ENCODE measurements at regions of chr21 and their contacts with region 1.

Region 1: DNA sequence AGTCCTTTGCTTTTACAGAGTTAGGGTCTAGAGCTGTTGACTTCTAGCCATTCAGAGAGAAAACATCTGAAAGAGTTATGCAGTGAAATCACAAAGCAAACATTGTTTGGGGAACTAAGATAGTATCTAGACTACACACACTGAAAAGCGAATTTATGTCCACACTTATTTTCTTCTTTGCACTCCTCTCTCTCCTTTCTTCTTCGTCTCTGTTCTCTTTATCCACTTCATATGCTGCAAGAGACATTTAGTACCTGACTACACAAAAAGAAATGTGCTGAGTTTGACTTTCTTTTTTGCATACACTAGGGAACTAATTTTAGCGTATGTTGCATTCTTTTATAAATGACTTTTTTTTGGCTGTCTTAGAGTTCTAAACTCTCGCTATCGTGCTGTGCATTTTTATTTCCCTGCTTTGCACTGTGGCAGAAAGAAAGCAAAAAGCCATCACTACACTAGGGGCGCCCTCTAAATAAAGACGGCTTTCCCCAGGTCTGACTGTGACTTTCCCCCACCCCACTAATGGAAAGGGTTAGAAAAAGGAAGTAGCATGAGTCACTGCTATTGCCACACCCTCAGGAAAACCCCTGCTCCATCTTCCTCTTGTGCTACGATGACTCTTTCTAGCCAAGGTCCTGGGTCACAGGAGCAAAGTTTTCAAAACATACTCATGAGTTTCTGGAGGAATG is 65.7 kb downstream of the MAP3K7CL start:
- DNase-seq: peak; percentile 33
- ATAC-seq: peak; percentile 97
- H3K4me3 Mint-ChIP-seq: peak overlapping the region; percentile 80
- H3K27ac Mint-ChIP-seq: peak overlapping the region; percentile 97
- H3K4me1 Mint-ChIP-seq: peaks cover 40% of the 10 kb centered on the region
- H3K27me3 Mint-ChIP-seq: no peaks in the 10 kb centered on the region
- CTCF ChIP-seq: peak; percentile 23

Region 2: DNA sequence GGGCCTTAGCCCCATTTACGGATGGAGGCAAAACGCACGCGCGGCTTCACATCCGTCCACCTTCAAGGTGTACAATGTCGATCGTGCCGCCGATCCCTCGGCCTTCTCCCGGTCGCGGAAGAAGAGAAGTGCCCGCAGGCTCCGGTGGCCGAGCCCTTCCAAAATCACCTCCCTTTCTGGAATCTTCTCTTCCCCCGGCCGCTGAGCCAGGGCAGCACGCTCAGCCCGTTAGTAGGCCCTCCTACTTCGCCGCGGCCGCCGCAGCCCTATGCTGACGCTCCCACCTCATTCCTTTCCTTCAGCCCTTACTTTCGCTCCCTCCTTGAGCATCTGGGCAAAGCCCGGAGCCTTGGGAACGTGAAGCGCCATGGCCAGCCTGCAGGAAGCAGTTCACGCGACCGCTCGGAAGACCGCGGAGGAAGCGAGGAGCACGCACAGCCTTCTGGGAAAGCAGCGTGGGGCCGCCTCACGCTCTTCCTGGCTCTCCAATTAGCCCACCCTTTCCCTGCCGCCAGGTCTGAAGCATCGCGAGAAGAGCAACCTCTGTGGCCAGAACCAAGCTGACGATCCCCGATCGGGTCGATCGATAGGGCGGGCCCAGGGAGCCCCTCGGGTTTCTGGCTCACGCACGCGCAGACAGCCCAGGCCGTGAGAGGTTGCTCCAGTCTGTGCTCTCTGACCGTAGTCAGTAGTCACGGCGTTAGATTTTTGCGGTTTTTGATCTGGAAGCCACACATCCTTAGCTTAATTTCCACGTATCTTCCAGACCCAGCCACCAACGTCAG is 122.7 kb before region 1 on chr21 and contains the start of gene CCT8:
- CTCF ChIA-PET with region 1: no interaction called
- POLR2A ChIA-PET with region 1: interaction called, 4 read pairs
- intact Hi-C with region 1: loop called (anchors 1 kb)
- DNase-seq: peak; percentile 93
- ATAC-seq: peak; percentile 90
- H3K4me3 Mint-ChIP-seq: peak within 1 kb of the TSS; percentile 98
- H3K27ac Mint-ChIP-seq: peak within 1 kb of the TSS; percentile 98
- H3K4me1 Mint-ChIP-seq: peaks cover 55% of the 10 kb centered on the region
- H3K27me3 Mint-ChIP-seq: no peaks in the 10 kb centered on the region
- CTCF ChIP-seq: no peak
- total RNA-seq, gene CCT8: 170 and 179 TPM in 2 replicates

Region 3: DNA sequence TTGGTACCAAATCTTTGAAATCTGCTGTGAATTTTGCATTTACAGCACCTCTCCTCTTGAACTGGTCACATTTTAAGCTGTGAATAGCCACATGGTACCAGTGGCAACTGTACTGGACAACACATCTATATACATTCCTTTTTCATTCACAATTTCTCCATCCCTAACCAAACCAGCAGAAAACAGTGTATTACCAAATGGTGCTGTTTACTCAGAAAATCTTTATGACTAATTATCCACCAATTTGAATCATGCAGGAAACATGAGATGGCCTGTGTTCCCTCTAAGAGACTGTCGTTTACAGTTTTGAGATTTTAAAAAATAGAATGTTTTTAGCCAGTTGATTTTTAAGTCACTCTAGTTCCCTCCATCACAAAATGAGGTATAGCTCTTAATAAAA is 105.1 kb before region 1 on chr21:
- CTCF ChIA-PET with region 1: no interaction called
- POLR2A ChIA-PET with region 1: no interaction called
- intact Hi-C with region 1: loop called (anchors 2 kb)
- DNase-seq: no peak
- ATAC-seq: no peak
- H3K4me3 Mint-ChIP-seq: no peak overlapping the region
- H3K27ac Mint-ChIP-seq: no peak overlapping the region
- H3K4me1 Mint-ChIP-seq: no peaks in the 10 kb centered on the region
- H3K27me3 Mint-ChIP-seq: no peaks in the 10 kb centered on the region
- CTCF ChIP-seq: no peak

Region 4: GRCh38 chr21:29164325-29164942 is 31.7 kb before region 1 on chr21:
- CTCF ChIA-PET with region 1: interaction called, 3 read pairs
- POLR2A ChIA-PET with region 1: no interaction called
- intact Hi-C with region 1: loop called (anchors 1 kb)
- DNase-seq: no peak
- ATAC-seq: peak; percentile 57
- H3K4me3 Mint-ChIP-seq: no peak overlapping the region
- H3K27ac Mint-ChIP-seq: no peak overlapping the region
- H3K4me1 Mint-ChIP-seq: peaks cover 7% of the 10 kb centered on the region
- H3K27me3 Mint-ChIP-seq: no peaks in the 10 kb centered on the region
- CTCF ChIP-seq: no peak

Region 5: DNA sequence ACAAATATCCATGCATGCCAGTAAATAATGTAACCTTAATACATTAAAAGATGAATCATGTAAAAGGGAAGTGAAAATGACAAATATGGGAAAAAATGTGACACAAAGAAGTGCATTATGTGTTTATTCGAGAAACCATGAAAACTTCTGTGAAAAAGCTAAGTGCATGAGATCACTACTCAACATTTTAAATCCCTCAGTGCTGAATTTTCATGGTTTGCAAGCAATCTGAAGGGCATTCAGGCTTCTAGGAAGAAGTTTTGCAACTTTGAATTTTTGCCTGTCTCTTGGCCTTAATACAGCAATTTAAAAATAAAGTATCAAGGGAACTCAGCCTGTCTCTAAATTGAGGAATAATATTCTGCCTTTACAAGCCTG is 12.5 kb after region 1 on chr21:
- CTCF ChIA-PET with region 1: interaction called, 3 read pairs
- POLR2A ChIA-PET with region 1: interaction called, 9 read pairs
- intact Hi-C with region 1: loop called (anchors 1 kb)
- DNase-seq: no peak
- ATAC-seq: peak; percentile 67
- H3K4me3 Mint-ChIP-seq: peak overlapping the region; percentile 62
- H3K27ac Mint-ChIP-seq: peak overlapping the region; percentile 84
- H3K4me1 Mint-ChIP-seq: peaks cover 23% of the 10 kb centered on the region
- H3K27me3 Mint-ChIP-seq: no peaks in the 10 kb centered on the region
- CTCF ChIP-seq: no peak

Region 6: GRCh38 chr21:29265690-29266479 is 69.8 kb after region 1 on chr21:
- CTCF ChIA-PET with region 1: no interaction called
- POLR2A ChIA-PET with region 1: no interaction called
- intact Hi-C with region 1: loop called (anchors 2 kb)
- DNase-seq: no peak
- ATAC-seq: peak; percentile 86
- H3K4me3 Mint-ChIP-seq: peak overlapping the region; percentile 17
- H3K27ac Mint-ChIP-seq: peak overlapping the region; percentile 82
- H3K4me1 Mint-ChIP-seq: peaks cover 21% of the 10 kb centered on the region
- H3K27me3 Mint-ChIP-seq: no peaks in the 10 kb centered on the region
- CTCF ChIP-seq: no peak

Region 7: GRCh38 chr21:29372063-29372802 is 176.1 kb after region 1 on chr21:
- CTCF ChIA-PET with region 1: interaction called, 3 read pairs
- POLR2A ChIA-PET with region 1: interaction called, 5 read pairs
- intact Hi-C with region 1: loop called (anchors 1 kb)
- DNase-seq: no peak
- ATAC-seq: peak; percentile 83
- H3K4me3 Mint-ChIP-seq: no peak overlapping the region
- H3K27ac Mint-ChIP-seq: peak overlapping the region; percentile 46
- H3K4me1 Mint-ChIP-seq: peaks cover 13% of the 10 kb centered on the region
- H3K27me3 Mint-ChIP-seq: no peaks in the 10 kb centered on the region
- CTCF ChIP-seq: peak; percentile 66